Left colon (tissue), 2 donors: ENCODE measurements at regions of chr14 and their contacts with region 1.

Region 1: GRCh38 chr14:63276492-63277342 is 42.0 kb downstream of the GPHB5 start:
- DNase-seq: no peak
- ATAC-seq: peak; percentile 42

Region 2: GRCh38 chr14:62179367-62180018 is 1097.2 kb before region 1 on chr14:
- intact Hi-C with region 1: loop called in 1 of 2 experiments (anchors 10 kb)
- DNase-seq: peak; percentile 20 to 26
- ATAC-seq: no peak

Region 3: DNA sequence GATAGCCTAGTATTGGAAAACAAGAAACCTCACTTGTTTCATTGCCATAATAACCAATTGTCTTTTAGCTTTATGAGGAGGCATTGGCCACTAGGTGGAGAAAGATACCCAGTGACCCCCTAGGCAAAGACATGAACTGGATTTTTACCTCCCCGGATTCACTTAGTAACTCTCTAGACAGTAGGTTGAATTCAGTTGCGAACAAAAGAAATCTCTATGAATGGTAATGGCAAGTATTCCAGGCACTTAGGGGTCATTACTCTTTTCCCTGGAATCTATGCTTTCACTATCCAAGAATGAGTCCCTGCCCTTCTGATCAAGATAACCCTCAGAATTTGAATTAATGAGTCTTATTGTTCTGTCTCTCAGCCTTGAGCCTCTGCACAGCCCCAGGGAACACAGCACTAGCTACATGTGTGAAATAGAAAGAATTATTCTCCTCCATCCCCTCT is 101.9 kb before region 1 on chr14:
- intact Hi-C with region 1: loop called in 1 of 2 experiments (anchors 2 kb)
- DNase-seq: no peak
- ATAC-seq: no peak